GM13977 (cell line): ENCODE measurements at regions of chr16 and their contacts with region 1.

Region 1: DNA sequence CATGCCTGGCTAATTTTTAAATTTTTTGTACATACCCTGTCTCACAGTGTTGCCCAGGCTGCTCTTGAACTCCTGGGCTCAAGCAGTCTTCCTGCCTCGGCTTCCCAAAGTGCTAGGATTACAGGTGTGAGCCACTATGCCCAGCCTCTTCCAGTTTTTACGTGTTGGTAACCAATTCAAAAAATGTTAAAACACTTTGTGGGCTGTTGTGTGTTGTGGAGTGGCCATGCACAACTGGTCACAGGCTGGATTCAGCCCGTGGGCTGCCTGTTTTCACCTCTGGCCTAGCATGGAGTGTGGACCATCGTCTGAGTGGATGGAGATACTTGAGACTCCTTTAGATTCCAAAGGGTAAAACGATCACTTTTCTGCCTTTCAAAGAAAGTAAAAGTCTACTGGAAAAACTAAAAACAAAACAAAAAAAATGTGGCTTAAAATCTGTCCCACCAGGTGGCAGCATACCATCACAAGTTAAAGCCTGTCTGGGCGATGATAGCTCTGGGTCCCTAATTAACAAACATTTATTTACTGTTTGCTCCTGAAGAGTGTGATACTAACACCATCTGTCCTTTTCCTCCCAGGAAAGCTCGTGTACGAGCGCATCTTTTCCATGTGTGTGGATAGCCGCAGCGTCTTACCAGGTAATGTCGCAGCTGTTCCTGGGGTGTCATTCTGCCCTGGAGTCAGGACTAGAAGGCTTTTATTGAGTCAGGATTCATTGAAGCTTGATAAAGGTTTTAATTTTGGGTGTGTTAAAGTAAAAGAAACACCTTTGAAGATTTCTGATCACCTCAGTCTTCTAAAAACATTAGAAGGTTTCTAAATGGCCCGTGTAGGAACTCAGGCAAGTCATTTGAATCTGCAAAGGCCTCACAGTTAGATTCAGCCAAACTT is 45.8 kb downstream of the VPS35L start:
- DNase-seq: peak; percentile 44
- CTCF ChIP-seq: peak; percentile 55

Region 2: GRCh38 chr16:19886073-19886941 is 285.0 kb after region 1 on chr16:
- in situ Hi-C with region 1: loop called (anchors 10 kb)
- DNase-seq: peak; percentile 77
- CTCF ChIP-seq: peak; percentile 98